ENCODE measurements at regions of chr1 and their contacts with region 1.

Region 1: GRCh38 chr1:26787706-26788514 is at the start of gene PIGV:
- DNase-seq: peak; percentile 93
- CTCF ChIP-seq: no peak

Region 2: GRCh38 chr1:26602378-26602959 is 185.4 kb before region 1 on chr1:
- CTCF ChIA-PET with region 1: interaction called, 257 read pairs
- POLR2A ChIA-PET with region 1: no interaction called
- DNase-seq: peak; percentile 65
- CTCF ChIP-seq: peak; percentile 74

Region 3: DNA sequence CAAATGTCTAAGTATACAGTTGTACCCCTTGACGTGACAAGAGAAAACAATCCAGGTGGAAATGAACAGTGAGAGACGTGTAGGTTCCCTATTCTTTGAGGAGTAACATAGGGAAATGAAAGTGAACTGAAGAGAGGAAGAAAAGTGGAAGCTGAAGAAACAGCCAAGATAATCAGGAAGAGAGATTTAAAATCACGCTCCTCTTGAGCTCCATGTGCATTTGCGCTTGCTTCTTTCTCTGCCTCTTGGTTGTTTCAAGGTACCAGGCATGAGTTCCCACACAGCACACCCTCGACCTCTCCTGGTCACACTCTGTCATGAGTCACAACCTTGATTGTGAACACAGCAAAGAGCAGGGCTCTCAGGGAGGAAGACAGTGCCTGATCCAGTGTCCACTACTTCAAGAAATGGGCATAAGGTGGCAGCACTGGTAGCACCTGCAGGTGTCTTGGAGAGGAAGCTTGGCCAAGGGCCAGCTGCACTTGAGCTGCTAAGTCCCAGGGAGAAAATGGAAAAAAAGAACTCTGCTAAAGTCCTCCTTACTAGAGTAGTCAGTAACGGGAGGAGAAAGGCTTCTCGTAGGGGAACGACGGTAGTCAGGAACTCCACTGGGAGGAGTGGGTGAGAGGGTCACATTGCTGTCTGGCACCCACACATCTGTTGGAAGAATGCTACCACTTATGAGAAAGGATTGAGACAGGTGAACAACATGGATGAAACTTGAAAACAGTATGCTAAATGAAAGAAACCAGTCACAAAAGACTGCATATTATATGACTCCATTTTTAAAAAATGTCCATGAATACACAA is 110.4 kb before region 1 on chr1:
- CTCF ChIA-PET with region 1: interaction called, 21 read pairs
- POLR2A ChIA-PET with region 1: interaction called, 3 read pairs
- DNase-seq: peak; percentile 74
- CTCF ChIP-seq: peak; percentile 57

Region 4: GRCh38 chr1:26744075-26744959 is 43.6 kb before region 1 on chr1:
- CTCF ChIA-PET with region 1: interaction called, 29 read pairs
- POLR2A ChIA-PET with region 1: no interaction called
- DNase-seq: peak; percentile 84
- CTCF ChIP-seq: peak; percentile 28

Region 5: GRCh38 chr1:26811057-26811456 is 23.1 kb after region 1 on chr1:
- CTCF ChIA-PET with region 1: interaction called, 47 read pairs
- POLR2A ChIA-PET with region 1: no interaction called
- DNase-seq: no peak
- CTCF ChIP-seq: no peak

Measured in GM10248 (cell line).